H1 (cell line): ENCODE measurements at regions of chr12 and their contacts with region 1.

Region 1: GRCh38 chr12:43711348-43711747 is 47.2 kb downstream of the PUS7L start:
- DNase-seq: no peak
- H3K4me3 ChIP-seq: no peak overlapping the region
- H3K27ac ChIP-seq: no peak overlapping the region
- H3K4me1 ChIP-seq: no peaks in the 10 kb centered on the region
- H3K27me3 ChIP-seq: no peaks in the 10 kb centered on the region
- CTCF ChIP-seq: no peak
- EP300 ChIP-seq: no peak
- POLR2A ChIP-seq: no peak
- RAD21 ChIP-seq: no peak

Region 2: GRCh38 chr12:43692064-43692463 is 19.3 kb before region 1 on chr12:
- CTCF ChIA-PET with region 1: no interaction called
- POLR2A ChIA-PET with region 1: no interaction called
- DNase-seq: no peak
- H3K4me3 ChIP-seq: no peak overlapping the region
- H3K27ac ChIP-seq: no peak overlapping the region
- H3K4me1 ChIP-seq: no peaks in the 10 kb centered on the region
- H3K27me3 ChIP-seq: no peaks in the 10 kb centered on the region
- CTCF ChIP-seq: no peak
- EP300 ChIP-seq: no peak
- POLR2A ChIP-seq: no peak
- RAD21 ChIP-seq: no peak

Region 3: GRCh38 chr12:43728117-43728516 is 16.8 kb after region 1 on chr12:
- CTCF ChIA-PET with region 1: interaction called, 10 read pairs
- POLR2A ChIA-PET with region 1: no interaction called
- DNase-seq: no peak
- H3K4me3 ChIP-seq: no peak overlapping the region
- H3K27ac ChIP-seq: no peak overlapping the region
- H3K4me1 ChIP-seq: no peaks in the 10 kb centered on the region; a peak in 1 of 7 replicates
- H3K27me3 ChIP-seq: no peaks in the 10 kb centered on the region
- CTCF ChIP-seq: no peak
- EP300 ChIP-seq: no peak
- POLR2A ChIP-seq: no peak
- RAD21 ChIP-seq: no peak